Dorsolateral prefrontal cortex (tissue), 120 donors: ENCODE measurements at regions of chr9 and their contacts with region 1.

Region 1: GRCh38 chr9:18442629-18443491 is 31.1 kb upstream of the ADAMTSL1 start:
- DNase-seq: peak; percentile 56 to 80 (median 72)
- H3K4me3 ChIP-seq: peak overlapping the region in 1 of 59 donors; percentile 12
- H3K27ac ChIP-seq: no peak overlapping the region
- H3K27me3 ChIP-seq: no peaks in the 10 kb centered on the region
- CTCF ChIP-seq: peak; percentile 67 to 97 (median 92)

Region 2: DNA sequence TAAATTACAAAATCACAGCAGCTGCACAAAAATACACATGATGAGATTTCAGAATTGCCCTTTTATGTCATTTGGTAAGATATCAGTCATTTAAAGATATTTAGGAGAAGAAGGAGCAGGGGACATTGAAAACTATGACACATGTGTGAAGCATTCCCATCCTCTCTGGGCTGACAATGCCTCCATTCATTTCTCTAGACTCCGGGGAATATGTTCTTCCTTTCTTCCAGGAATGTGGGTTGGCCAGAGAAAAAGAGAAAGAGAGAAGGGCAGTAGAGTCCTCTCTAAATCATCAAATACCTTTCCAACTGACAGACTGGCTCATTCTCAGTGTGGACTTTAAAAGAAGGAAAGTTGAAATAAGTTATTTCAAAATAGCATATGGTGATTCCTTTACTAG is 174.5 kb before region 1 on chr9:
- intact Hi-C with region 1: loop called in 1 of 2 experiments (anchors 10 kb)
- DNase-seq: no peak
- H3K4me3 ChIP-seq: no peak overlapping the region
- H3K27ac ChIP-seq: no peak overlapping the region
- H3K27me3 ChIP-seq: no peaks in the 10 kb centered on the region
- CTCF ChIP-seq: no peak

Region 3: GRCh38 chr9:18605766-18606180 is 162.9 kb after region 1 on chr9:
- intact Hi-C with region 1: loop called (anchors 5 to 10 kb)
- DNase-seq: no peak
- H3K4me3 ChIP-seq: no peak overlapping the region
- H3K27ac ChIP-seq: peak overlapping the region in 9 of 59 donors; percentile 15 to 53 (median 29)
- H3K27me3 ChIP-seq: no peaks in the 10 kb centered on the region
- CTCF ChIP-seq: no peak

Region 4: DNA sequence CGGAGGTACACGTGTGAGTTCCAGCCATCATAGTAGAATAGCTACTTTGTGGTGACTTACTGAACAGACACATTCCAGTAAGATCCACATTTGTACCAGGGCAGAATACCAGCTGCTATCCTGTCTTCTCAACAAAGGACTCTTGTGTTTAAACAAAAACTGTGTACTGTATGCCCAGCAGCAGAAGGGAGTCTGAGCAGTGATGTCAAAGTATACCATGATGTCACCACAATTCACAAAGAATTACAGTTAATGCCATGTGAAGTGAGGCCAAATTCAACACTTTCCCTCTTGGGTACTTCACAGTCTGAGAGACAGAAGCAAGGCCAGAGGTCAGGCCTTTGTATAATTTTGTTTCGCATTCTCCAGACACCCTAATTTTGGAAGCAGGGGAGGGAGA is 168.1 kb after region 1 on chr9:
- intact Hi-C with region 1: loop called (anchors 5 to 10 kb)
- DNase-seq: peak in 2 of 10 donors; percentile 26 to 27
- H3K4me3 ChIP-seq: peak overlapping the region in 3 of 59 donors; percentile 20 to 29 (median 26)
- H3K27ac ChIP-seq: peak overlapping the region in 3 of 59 donors; percentile 22 to 41 (median 22)
- H3K27me3 ChIP-seq: no peaks in the 10 kb centered on the region
- CTCF ChIP-seq: peak in 4 of 56 donors; percentile 8 to 18 (median 14)

Region 5: GRCh38 chr9:18756712-18757125 is 313.9 kb after region 1 on chr9:
- intact Hi-C with region 1: no loop called
- DNase-seq: no peak
- H3K4me3 ChIP-seq: no peak overlapping the region
- H3K27ac ChIP-seq: no peak overlapping the region
- H3K27me3 ChIP-seq: no peaks in the 10 kb centered on the region
- CTCF ChIP-seq: no peak

Region 6: GRCh38 chr9:18824095-18824666 is 381.3 kb after region 1 on chr9:
- intact Hi-C with region 1: loop called in 1 of 2 experiments (anchors 10 kb)
- DNase-seq: no peak
- H3K4me3 ChIP-seq: no peak overlapping the region
- H3K27ac ChIP-seq: no peak overlapping the region
- H3K27me3 ChIP-seq: no peaks in the 10 kb centered on the region
- CTCF ChIP-seq: peak in 43 of 56 donors; percentile 14 to 56 (median 32)

Region 7: GRCh38 chr9:19028835-19029451 is 586.1 kb after region 1 on chr9:
- intact Hi-C with region 1: loop called in 1 of 2 experiments (anchors 5 kb)
- DNase-seq: peak in 2 of 10 donors; percentile 31 to 39
- H3K4me3 ChIP-seq: peak overlapping the region in 5 of 59 donors; percentile 4 to 52 (median 15)
- H3K27ac ChIP-seq: no peak overlapping the region
- H3K27me3 ChIP-seq: peaks cover 0 to 9% (median 0%) of the 10 kb centered on the region in 45 donors
- CTCF ChIP-seq: peak; percentile 71 to 93 (median 85)

Region 8: GRCh38 chr9:19174127-19174912 is 731.5 kb after region 1 on chr9:
- intact Hi-C with region 1: no loop called
- DNase-seq: peak in 1 of 10 donors; percentile 18
- H3K4me3 ChIP-seq: peak overlapping the region in 15 of 59 donors; percentile 5 to 32 (median 18)
- H3K27ac ChIP-seq: no peak overlapping the region
- H3K27me3 ChIP-seq: no peaks in the 10 kb centered on the region
- CTCF ChIP-seq: peak in 54 of 56 donors; percentile 23 to 83 (median 62)